GM12878 (cell line): ENCODE measurements at regions of chr15 and their contacts with region 1.

Region 1: DNA sequence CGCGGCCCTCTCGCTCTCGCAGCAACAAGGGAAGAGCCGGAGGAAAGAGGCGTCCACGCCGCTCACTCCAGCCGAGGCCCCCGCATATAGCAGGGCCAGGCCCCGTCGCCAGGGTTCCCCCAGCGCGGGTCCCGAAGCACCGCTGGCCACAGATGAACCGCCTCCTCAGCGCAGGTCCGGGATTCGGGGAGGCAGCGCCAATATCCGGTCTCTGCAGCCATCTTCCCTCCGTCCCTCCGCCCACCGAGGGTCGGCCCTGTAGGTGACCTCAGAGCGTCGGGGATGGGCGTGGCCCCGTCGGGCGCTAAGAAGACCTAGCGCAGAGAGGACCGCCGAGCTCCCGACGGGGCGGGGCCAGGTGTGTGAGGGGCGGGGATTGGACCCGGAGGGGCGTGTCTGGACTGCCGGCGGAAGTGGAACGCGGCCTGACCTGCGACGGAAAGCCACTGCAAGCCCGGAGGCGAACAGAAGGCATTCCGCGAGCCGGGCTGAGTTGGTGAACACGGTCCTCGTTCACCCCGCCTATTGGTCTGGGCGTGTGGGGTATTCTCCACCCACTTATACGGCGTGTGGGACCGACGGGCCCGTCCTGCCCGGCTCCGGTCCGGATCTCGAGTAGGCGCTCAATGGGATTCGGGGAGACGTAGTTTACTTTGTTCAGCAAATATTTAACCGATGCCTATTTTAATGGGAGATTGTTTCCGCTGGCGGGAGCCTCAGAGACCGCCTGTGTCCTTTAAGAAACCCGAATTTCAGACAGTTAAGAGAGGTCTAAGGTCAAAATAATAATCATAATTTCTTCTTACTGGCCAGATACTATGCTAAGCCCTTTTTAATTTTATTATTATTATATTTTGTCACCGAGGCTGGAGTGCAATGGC is 26.9 kb upstream of the MTHFS start:
- DNase-seq: peak; percentile 94
- ATAC-seq: peak; percentile 97
- H3K4me3 ChIP-seq: peak overlapping the region; percentile 80
- H3K27ac ChIP-seq: peak overlapping the region; percentile 92
- H3K4me1 ChIP-seq: no peaks in the 10 kb centered on the region
- H3K27me3 ChIP-seq: no peaks in the 10 kb centered on the region
- CTCF ChIP-seq: no peak
- EP300 ChIP-seq: no peak
- POLR2A ChIP-seq: peak; percentile 94
- RAD21 ChIP-seq: 0 out of 2 replicates have a peak, but pooled peaks have one; percentile 2

Region 2: GRCh38 chr15:79769069-79769481 is 154.7 kb before region 1 on chr15:
- CTCF ChIA-PET with region 1: no interaction called
- POLR2A ChIA-PET with region 1: no interaction called
- RAD21 ChIA-PET with region 1: no interaction called
- SMC1A ChIA-PET with region 1: no interaction called
- in situ Hi-C with region 1: no loop called
- intact Hi-C with region 1: no loop called
- DNase-seq: no peak
- ATAC-seq: peak; percentile 74
- H3K4me3 ChIP-seq: no peak overlapping the region
- H3K27ac ChIP-seq: no peak overlapping the region
- H3K4me1 ChIP-seq: no peaks in the 10 kb centered on the region
- H3K27me3 ChIP-seq: no peaks in the 10 kb centered on the region; a peak in 1 of 4 replicates
- CTCF ChIP-seq: peak; percentile 37 to 58 (median 45)
- EP300 ChIP-seq: no peak
- POLR2A ChIP-seq: no peak
- RAD21 ChIP-seq: peak; percentile 68

Region 3: DNA sequence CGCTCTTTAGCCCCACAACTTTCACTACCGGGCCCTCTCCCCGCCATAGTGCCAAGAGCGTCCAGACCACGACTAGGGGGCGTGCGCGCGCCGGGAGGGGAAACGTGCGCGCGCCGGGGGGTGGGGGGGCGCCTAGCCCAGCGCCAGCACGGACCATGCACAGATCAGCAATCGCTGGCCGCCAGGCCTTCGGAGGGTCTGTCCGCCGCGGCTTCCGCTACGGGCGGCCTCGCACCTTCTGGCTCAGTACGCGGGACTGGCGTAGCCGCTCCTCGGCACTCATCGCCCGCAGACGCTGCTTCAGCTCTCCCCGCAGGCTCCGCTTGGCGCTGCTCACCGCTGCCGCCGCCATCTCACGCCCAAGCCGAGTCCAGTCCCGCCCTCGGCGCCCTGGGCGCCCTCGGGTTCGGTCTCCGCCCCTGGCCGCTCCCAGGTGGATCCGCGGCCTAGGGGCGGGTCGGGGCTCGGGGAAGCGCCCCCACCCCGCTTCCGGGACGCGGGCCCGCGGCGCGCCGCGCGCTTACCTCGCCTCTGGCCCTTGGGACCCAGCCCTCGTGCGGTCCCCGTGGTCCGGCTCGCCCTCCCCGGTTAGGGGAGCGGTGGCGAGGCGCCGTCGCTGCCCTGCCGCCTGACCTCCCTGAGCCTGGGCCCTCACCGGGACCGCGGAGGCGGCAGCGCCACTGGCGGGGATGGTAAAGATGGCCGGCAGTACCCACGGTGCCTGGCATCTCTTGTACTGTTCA is 26.9 kb before region 1 on chr15 and contains the start of gene MTHFS:
- CTCF ChIA-PET with region 1: interaction called, 6 read pairs
- POLR2A ChIA-PET with region 1: interaction called, 17 read pairs
- RAD21 ChIA-PET with region 1: interaction called, 16 read pairs
- SMC1A ChIA-PET with region 1: interaction called, 31 read pairs
- in situ Hi-C with region 1: no loop called
- intact Hi-C with region 1: loop called (anchors 2 kb)
- DNase-seq: no peak
- ATAC-seq: peak; percentile 86
- H3K4me3 ChIP-seq: peak within 1 kb of the TSS; percentile 66
- H3K27ac ChIP-seq: peak within 1 kb of the TSS; percentile 85
- H3K4me1 ChIP-seq: peaks cover 16% of the 10 kb centered on the region
- H3K27me3 ChIP-seq: no peaks in the 10 kb centered on the region
- CTCF ChIP-seq: peak; percentile 44 to 62 (median 54)
- EP300 ChIP-seq: 0 out of 4 replicates have a peak, but pooled peaks of 1 of the 2 experiments have one; percentile 26
- POLR2A ChIP-seq: peak; percentile 94
- RAD21 ChIP-seq: peak; percentile 57
- polyA plus RNA-seq, gene MTHFS: 14.0 to 24.5 TPM

Region 4: DNA sequence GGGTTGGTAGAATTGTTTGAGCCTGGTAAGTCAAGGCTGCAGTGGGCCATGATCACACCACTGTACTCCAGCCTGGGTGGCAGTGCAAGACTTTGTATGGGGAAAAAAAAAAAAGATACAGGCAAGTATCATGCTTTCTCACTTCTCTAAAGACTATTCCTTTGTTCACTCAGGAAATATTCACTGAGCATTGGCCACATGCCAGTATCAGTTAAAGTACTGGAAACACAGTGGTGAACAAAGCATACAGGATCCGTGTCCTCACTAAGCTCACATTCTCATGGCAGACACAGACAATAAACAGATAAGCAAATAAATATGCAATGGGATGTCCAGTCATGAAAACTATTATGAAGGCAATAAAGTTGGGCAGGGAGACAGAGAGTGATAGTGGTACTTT is 21.8 kb before region 1 on chr15:
- CTCF ChIA-PET with region 1: interaction called, 8 read pairs
- POLR2A ChIA-PET with region 1: interaction called, 21 read pairs
- RAD21 ChIA-PET with region 1: interaction called, 16 read pairs
- SMC1A ChIA-PET with region 1: interaction called, 31 read pairs
- in situ Hi-C with region 1: no loop called
- intact Hi-C with region 1: loop called (anchors 2 kb)
- DNase-seq: peak; percentile 90
- ATAC-seq: peak; percentile 42
- H3K4me3 ChIP-seq: no peak overlapping the region
- H3K27ac ChIP-seq: peak overlapping the region; percentile 36
- H3K4me1 ChIP-seq: peaks cover 33% of the 10 kb centered on the region
- H3K27me3 ChIP-seq: no peaks in the 10 kb centered on the region
- CTCF ChIP-seq: peak in 1 of 3 experiments; percentile 9; a peak in 1 of 6 replicates
- EP300 ChIP-seq: no peak
- POLR2A ChIP-seq: no peak
- RAD21 ChIP-seq: no peak

Region 5: DNA sequence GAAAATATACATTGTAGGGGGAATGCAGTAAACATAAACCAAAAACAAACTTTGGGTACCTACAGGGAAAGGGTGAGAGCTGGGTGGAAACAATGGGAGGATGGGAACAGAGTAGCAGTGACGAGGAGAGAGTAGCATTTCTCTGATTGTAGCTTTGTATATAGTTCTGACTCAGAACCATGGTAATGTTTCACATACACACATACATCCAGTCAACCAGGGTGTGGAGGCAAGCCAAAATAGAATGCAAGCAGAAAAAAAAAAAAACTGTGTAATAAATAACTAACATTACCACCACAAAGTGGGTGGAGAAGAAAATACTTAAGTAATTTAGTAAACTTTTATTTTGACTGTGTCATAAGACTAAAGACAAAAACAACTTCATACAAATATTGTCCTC is 20.1 kb after region 1 on chr15:
- CTCF ChIA-PET with region 1: interaction called, 7 read pairs
- POLR2A ChIA-PET with region 1: interaction called, 11 read pairs
- RAD21 ChIA-PET with region 1: interaction called, 9 read pairs
- SMC1A ChIA-PET with region 1: interaction called, 37 read pairs
- in situ Hi-C with region 1: no loop called
- intact Hi-C with region 1: no loop called
- DNase-seq: no peak
- ATAC-seq: peak; percentile 84
- H3K4me3 ChIP-seq: no peak overlapping the region
- H3K27ac ChIP-seq: no peak overlapping the region
- H3K4me1 ChIP-seq: peaks cover 16% of the 10 kb centered on the region
- H3K27me3 ChIP-seq: no peaks in the 10 kb centered on the region
- CTCF ChIP-seq: no peak
- EP300 ChIP-seq: peak; percentile 72 to 89
- POLR2A ChIP-seq: no peak
- RAD21 ChIP-seq: no peak

Region 6: DNA sequence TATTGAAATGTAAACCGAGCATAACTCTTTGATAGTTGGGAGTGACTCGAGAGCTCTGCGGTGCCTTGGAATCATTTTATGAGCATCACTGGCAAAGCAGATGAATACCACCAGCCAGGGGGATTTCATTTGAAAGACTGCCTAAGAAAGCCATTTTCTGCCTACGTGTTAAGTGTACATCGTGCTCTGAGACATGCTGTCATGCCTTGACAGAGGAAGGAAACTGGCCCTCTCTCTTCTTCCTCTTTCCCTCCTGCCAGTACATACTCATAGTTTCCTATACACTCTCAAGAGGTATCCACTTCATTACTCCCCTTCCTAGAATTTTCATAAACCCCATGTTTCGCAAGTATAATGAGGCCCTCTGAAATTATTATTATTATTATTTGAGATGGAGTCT is 38.4 kb after region 1 on chr15:
- CTCF ChIA-PET with region 1: interaction called, 12 read pairs
- POLR2A ChIA-PET with region 1: interaction called, 49 read pairs
- RAD21 ChIA-PET with region 1: interaction called, 52 read pairs
- SMC1A ChIA-PET with region 1: interaction called, 54 read pairs
- in situ Hi-C with region 1: no loop called
- intact Hi-C with region 1: no loop called
- DNase-seq: no peak
- ATAC-seq: peak; percentile 53
- H3K4me3 ChIP-seq: peak overlapping the region; percentile 28
- H3K27ac ChIP-seq: peak overlapping the region; percentile 72
- H3K4me1 ChIP-seq: peaks cover 2% of the 10 kb centered on the region; the same call in 1 of the 2 replicates
- H3K27me3 ChIP-seq: no peaks in the 10 kb centered on the region
- CTCF ChIP-seq: no peak
- EP300 ChIP-seq: no peak
- POLR2A ChIP-seq: peak; percentile 37; the same call in 1 of the 2 replicates
- RAD21 ChIP-seq: no peak